Left lung (tissue), 14 donors: ENCODE measurements at regions of chr14 and their contacts with region 1.

Region 1: GRCh38 chr14:76710056-76711010 is 50.9 kb upstream of the VASH1 start:
- DNase-seq: peak in 2 of 4 donors; percentile 42 to 53
- ATAC-seq: peak; percentile 86
- H3K4me3 ChIP-seq: no peak overlapping the region
- H3K27ac ChIP-seq: no peak overlapping the region
- H3K4me1 ChIP-seq: no peaks in the 10 kb centered on the region
- H3K27me3 ChIP-seq: no peaks in the 10 kb centered on the region
- CTCF ChIP-seq: peak; percentile 66 to 75

Region 2: GRCh38 chr14:76784266-76785264 is 74.2 kb after region 1 on chr14:
- intact Hi-C with region 1: loop called in 1 of 2 experiments (anchors 10 kb)
- DNase-seq: peak in 2 of 4 donors; percentile 67 to 72
- ATAC-seq: peak; percentile 93
- H3K4me3 ChIP-seq: no peak overlapping the region
- H3K27ac ChIP-seq: no peak overlapping the region
- H3K4me1 ChIP-seq: peaks cover 3 to 39% of the 10 kb centered on the region in 2 donors
- H3K27me3 ChIP-seq: no peaks in the 10 kb centered on the region
- CTCF ChIP-seq: peak; percentile 70 to 85

Region 3: GRCh38 chr14:76806446-76806845 is 96.1 kb after region 1 on chr14:
- intact Hi-C with region 1: loop called in 1 of 2 experiments (anchors 5 kb)
- DNase-seq: no peak
- ATAC-seq: no peak
- H3K4me3 ChIP-seq: no peak overlapping the region
- H3K27ac ChIP-seq: no peak overlapping the region
- H3K4me1 ChIP-seq: peaks cover 0 to 13% of the 10 kb centered on the region in 2 donors
- H3K27me3 ChIP-seq: no peaks in the 10 kb centered on the region
- CTCF ChIP-seq: no peak